CD8-positive, alpha-beta T cell (primary cell): ENCODE measurements at regions of chr13 and their contacts with region 1.

Region 1: GRCh38 chr13:77697217-77698103 is at the start of gene SLAIN1:
- DNase-seq: peak; percentile 65 to 94 (median 86)
- ATAC-seq: peak; percentile 80
- H3K4me3 ChIP-seq: peak within 1 kb of the TSS; percentile 88
- H3K4me3 Mint-ChIP-seq: peak within 1 kb of the TSS; percentile 96
- H3K27ac ChIP-seq: peak within 1 kb of the TSS; percentile 54 to 71
- H3K27ac Mint-ChIP-seq: peak within 1 kb of the TSS; percentile 97
- H3K4me1 ChIP-seq: peaks cover 35% of the 10 kb centered on the region
- H3K4me1 Mint-ChIP-seq: peaks cover 44% of the 10 kb centered on the region
- H3K27me3 ChIP-seq: no peaks in the 10 kb centered on the region
- H3K27me3 Mint-ChIP-seq: no peaks in the 10 kb centered on the region
- CTCF ChIP-seq: no peak
- total RNA-seq, gene SLAIN1: 35.4 to 36.4 TPM

Region 2: DNA sequence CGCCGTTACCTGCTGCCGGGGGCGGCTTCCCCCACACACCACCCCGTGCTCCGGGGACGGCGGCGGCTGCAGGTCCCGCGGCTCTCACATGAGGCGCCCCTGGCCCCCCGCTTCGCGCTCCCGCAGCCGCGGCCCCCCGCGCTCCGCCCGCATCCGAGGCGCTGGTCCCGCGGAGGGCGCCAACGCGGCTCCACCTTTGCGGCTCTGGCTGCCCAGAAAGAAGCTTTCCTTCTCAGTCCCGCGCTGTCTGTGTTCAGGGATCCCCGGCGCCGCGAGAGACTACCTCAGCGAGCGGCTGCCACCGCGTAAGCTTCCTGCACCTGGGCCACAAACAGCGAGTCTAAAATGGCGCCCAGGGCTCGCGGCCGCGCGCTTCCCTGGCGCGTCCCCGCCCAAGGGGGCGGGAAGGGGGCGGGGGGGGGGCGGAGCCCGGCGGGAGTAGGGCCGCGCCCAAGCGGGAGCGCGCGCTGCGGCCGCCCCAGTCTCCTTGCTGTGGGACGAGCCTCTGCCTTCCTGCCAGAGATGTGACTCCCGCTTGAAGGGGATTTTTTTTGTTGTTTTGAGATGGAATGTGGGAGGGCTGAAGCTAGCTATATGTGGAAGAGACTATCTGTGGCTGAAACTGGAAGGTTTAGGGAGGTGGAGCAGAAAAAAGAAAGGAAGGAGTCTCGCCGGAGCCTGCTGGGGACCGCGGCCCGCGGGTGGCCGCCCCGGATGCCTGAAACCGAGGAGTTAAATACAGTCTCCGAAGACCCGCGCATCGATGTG is 670.5 kb before region 1 on chr13 and contains the start of gene FBXL3:
- CTCF ChIA-PET with region 1: no interaction called
- POLR2A ChIA-PET with region 1: interaction called, 6 read pairs
- intact Hi-C with region 1: loop called (anchors 2 kb)
- DNase-seq: peak; percentile 68 to 92 (median 80)
- ATAC-seq: peak; percentile 64
- H3K4me3 ChIP-seq: peak within 1 kb of the TSS; percentile 73 to 80
- H3K4me3 Mint-ChIP-seq: peak within 1 kb of the TSS; percentile 97
- H3K27ac ChIP-seq: peak within 1 kb of the TSS; percentile 80 to 97
- H3K27ac Mint-ChIP-seq: peak within 1 kb of the TSS; percentile 99
- H3K4me1 ChIP-seq: peaks cover 40% of the 10 kb centered on the region
- H3K4me1 Mint-ChIP-seq: peaks cover 51% of the 10 kb centered on the region
- H3K27me3 ChIP-seq: no peaks in the 10 kb centered on the region
- H3K27me3 Mint-ChIP-seq: no peaks in the 10 kb centered on the region
- CTCF ChIP-seq: no peak
- total RNA-seq, gene FBXL3: 91.3 to 97.0 TPM

Region 3: DNA sequence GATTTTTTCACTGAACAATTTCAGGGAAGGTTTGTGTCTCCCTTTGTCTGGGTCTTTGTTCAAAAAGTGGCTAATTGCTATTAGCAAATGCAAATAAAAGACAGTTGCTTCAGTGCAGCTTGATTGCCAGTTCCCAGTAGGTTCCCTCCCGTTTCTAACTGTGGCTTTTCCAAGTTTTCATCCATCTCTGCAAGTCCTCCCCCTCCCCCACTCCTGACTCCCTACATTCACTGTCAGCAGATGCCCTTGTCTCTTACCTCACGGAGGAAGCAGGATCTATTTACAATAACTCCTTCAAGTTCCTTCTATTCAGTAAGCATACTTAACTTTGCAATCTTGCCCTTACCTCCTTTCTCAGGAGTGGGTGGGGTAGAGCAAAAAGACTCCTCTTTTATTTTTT is 217.4 kb before region 1 on chr13:
- CTCF ChIA-PET with region 1: no interaction called
- POLR2A ChIA-PET with region 1: no interaction called
- intact Hi-C with region 1: loop called in 1 of 2 experiments (anchors 10 kb)
- DNase-seq: no peak
- ATAC-seq: no peak
- H3K4me3 ChIP-seq: no peak overlapping the region
- H3K4me3 Mint-ChIP-seq: no peak overlapping the region
- H3K27ac ChIP-seq: no peak overlapping the region
- H3K27ac Mint-ChIP-seq: no peak overlapping the region
- H3K4me1 ChIP-seq: no peaks in the 10 kb centered on the region
- H3K4me1 Mint-ChIP-seq: peaks cover 10% of the 10 kb centered on the region
- H3K27me3 ChIP-seq: no peaks in the 10 kb centered on the region
- H3K27me3 Mint-ChIP-seq: no peaks in the 10 kb centered on the region
- CTCF ChIP-seq: no peak

Region 4: GRCh38 chr13:77720988-77721387 is 23.5 kb after region 1 on chr13:
- CTCF ChIA-PET with region 1: no interaction called
- POLR2A ChIA-PET with region 1: no interaction called
- intact Hi-C with region 1: loop called in 1 of 2 experiments (anchors 2 kb)
- DNase-seq: no peak
- ATAC-seq: no peak
- H3K4me3 ChIP-seq: no peak overlapping the region
- H3K4me3 Mint-ChIP-seq: no peak overlapping the region
- H3K27ac ChIP-seq: no peak overlapping the region
- H3K27ac Mint-ChIP-seq: peak overlapping the region; percentile 68
- H3K4me1 ChIP-seq: no peaks in the 10 kb centered on the region
- H3K4me1 Mint-ChIP-seq: peaks cover 51% of the 10 kb centered on the region
- H3K27me3 ChIP-seq: no peaks in the 10 kb centered on the region
- H3K27me3 Mint-ChIP-seq: no peaks in the 10 kb centered on the region
- CTCF ChIP-seq: no peak

Region 5: DNA sequence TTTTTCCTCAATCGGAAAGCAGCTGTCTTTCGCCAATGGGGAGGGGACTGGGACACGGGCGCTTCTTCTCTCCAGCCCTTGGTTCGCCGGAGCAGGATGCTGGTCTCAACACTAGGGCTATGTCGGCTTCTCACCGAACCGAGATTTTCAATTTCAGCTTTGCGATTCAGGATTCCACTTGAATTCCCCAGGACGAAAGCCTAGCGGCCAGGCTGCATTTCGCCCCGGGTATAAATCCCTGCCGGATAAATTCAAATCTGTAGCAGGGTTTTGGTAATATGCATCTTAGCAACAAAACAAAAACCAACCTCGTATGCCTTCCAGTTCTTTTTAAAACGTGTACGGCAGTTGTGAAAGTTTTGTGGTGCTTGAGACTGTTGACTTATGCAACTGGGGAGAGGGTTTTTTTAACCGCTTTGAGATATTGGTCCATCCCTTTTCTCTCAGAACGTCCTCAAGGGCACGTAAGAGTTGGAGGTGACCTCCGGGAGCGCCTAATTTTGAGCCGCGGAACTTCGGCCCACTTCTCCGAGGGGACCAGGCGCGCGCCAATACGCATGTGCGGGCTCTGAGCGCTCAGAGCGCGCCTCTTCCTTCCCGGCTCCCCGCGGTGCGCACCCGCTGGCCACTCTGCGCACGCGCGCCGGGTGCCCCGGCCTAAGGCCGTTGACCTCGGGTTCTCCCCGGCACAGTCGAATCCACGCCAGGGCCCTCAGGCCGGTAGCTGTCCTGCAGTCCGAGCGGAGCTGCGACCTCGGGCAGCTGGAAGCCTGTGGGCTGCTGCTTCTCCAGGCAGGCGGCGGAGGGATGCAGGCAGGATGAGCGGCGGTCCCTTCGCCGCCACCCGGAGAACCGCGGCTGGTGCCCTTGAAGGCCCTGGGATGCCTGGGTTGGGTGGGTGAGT is 898.3 kb after region 1 on chr13:
- CTCF ChIA-PET with region 1: no interaction called
- POLR2A ChIA-PET with region 1: no interaction called
- intact Hi-C with region 1: loop called in 1 of 2 experiments (anchors 10 kb)
- DNase-seq: no peak
- ATAC-seq: no peak
- H3K4me3 ChIP-seq: no peak overlapping the region
- H3K4me3 Mint-ChIP-seq: no peak overlapping the region
- H3K27ac ChIP-seq: no peak overlapping the region
- H3K27ac Mint-ChIP-seq: no peak overlapping the region
- H3K4me1 ChIP-seq: peaks cover 12% of the 10 kb centered on the region
- H3K4me1 Mint-ChIP-seq: peaks cover 11% of the 10 kb centered on the region
- H3K27me3 ChIP-seq: peaks cover 69 to 80% of the 10 kb centered on the region in 2 experiments
- H3K27me3 Mint-ChIP-seq: peaks cover 79% of the 10 kb centered on the region
- CTCF ChIP-seq: no peak

Region 6: DNA sequence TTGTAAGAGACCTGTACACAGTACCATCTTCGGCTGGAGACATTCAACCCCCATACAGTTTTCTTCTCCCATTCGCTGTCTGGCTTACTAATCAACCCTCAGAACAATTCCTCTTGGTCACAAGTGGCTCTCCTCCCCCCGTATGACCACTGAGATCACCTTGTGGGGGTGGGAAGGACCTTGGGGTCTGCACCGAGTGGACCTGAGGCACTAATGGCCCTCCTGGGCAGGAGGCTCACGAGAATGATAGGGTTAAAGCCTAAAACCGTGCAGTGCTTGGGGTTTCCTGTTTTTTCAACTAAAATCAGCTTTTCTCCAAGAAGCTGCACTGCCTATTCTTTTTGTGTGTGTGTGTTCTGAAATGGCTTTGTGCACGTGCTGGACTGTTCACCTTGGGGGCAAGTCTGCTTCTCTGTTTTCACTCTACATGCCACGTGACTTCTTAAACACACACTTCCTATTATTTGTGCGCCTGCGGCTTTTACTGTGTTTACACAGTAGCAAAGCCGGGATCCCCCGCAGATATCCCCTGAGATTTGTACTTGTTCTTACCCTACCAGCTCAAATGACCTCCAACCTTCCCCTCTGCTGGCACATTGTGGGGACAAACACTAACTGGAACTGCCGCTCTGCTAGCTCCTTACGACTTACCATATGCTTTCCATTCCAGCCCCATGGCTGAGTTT is 1696.2 kb after region 1 on chr13:
- CTCF ChIA-PET with region 1: no interaction called
- POLR2A ChIA-PET with region 1: no interaction called
- intact Hi-C with region 1: loop called in 1 of 2 experiments (anchors 5 kb)
- DNase-seq: peak in 8 of 9 experiments; percentile 21 to 83 (median 60)
- ATAC-seq: peak; percentile 66
- H3K4me3 ChIP-seq: peak overlapping the region; percentile 15 to 59
- H3K4me3 Mint-ChIP-seq: peak overlapping the region; percentile 84
- H3K27ac ChIP-seq: peak overlapping the region; percentile 42 to 49
- H3K27ac Mint-ChIP-seq: peak overlapping the region; percentile 95
- H3K4me1 ChIP-seq: peaks cover 58% of the 10 kb centered on the region
- H3K4me1 Mint-ChIP-seq: peaks cover 69% of the 10 kb centered on the region
- H3K27me3 ChIP-seq: no peaks in the 10 kb centered on the region
- H3K27me3 Mint-ChIP-seq: no peaks in the 10 kb centered on the region
- CTCF ChIP-seq: no peak